Dorsolateral prefrontal cortex (tissue), 120 donors: ENCODE measurements at regions of chr9 and their contacts with region 1.

Region 1: DNA sequence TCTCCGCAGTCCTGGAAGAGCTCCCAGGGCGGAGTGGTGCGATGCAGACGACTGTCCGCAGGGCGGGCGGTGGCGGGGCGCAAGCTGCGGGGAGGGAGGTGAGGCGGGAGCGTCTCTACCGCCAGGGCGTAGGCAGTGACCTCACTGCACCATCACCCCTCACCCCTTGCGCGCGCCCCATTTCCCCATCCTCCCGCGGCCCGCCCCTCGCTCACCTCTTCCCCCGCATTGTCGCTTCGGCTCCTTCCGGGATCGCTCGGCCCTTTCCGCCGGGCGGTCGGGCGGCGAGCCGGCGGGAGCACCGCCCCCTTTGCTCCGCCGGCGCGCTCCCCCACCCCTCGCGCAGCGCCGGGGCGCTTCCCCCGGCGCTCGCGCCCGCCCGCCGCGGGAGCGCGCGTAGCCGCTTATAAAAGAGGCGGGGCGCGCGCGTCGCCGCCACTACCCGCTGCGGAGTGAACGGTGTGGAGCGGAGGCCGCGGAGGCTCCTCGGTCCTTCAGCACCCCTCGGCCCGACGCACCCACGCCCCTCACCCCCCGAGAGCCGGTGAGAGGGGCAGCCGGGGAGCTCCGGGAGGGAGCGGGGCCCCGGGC is at the start of gene SPTAN1:
- DNase-seq: peak; percentile 69 to 94 (median 86)
- H3K4me3 ChIP-seq: peak within 1 kb of the TSS; percentile 54 to 99 (median 92)
- H3K27ac ChIP-seq: peak within 1 kb of the TSS; percentile 66 to 99 (median 96)
- H3K27me3 ChIP-seq: no peaks in the 10 kb centered on the region
- CTCF ChIP-seq: peak in 19 of 56 donors; percentile 7 to 45 (median 18)
- total RNA-seq, gene SPTAN1: 588 to 1,376 (median 1,110) TPM

Region 2: GRCh38 chr9:128322404-128323211 is 229.6 kb before region 1 on chr9 and contains the starts of genes COQ4 and TRUB2:
- intact Hi-C with region 1: loop called in 1 of 2 experiments (anchors 10 kb)
- DNase-seq: peak; percentile 89 to 96 (median 94)
- H3K4me3 ChIP-seq: peak within 1 kb of the TSS; percentile 68 to 100 (median 95)
- H3K27ac ChIP-seq: peak within 1 kb of the TSS; percentile 81 to 100 (median 98)
- H3K27me3 ChIP-seq: no peaks in the 10 kb centered on the region
- CTCF ChIP-seq: peak in 28 of 56 donors; percentile 2 to 57 (median 22)
- total RNA-seq, gene COQ4: 28.0 to 67.5 (median 47.0) TPM
- total RNA-seq, gene TRUB2: 20.6 to 66.5 (median 44.9) TPM

Region 3: DNA sequence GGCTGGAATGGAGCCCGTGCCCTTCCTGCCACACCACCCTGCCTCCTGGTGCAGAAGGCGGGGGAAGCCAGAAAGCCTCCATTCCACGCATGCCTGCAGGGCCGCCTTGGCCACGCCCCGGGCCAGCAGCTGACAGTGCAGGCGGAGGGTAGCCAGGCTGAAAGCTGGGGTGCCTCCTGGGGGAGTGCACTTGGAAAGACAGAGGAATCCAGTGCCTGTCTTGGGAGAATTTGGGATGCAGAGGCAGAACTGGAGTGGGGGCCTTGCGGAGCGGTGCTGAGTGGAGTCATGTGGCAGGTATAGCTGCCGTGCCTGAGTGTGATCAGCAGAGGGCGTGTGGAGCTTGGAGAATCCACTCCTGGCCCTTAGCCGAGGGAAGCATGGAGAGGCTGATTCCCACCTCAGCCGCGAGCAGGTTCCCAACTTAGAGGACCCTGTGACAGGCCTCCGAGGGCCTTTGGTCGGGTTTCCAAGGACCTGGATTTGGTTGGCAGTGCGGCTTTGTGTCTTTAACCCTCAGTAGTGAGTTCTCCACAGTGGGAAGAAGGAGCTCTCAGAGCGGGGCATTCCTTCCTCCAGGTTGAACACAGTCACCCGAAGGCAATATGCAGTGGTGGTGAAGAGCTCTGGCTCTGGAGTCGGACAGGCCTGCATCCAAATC is 190.1 kb before region 1 on chr9:
- intact Hi-C with region 1: loop called in 1 of 2 experiments (anchors 5 kb)
- DNase-seq: peak; percentile 76 to 93 (median 91)
- H3K4me3 ChIP-seq: peak overlapping the region in 58 of 59 donors; percentile 12 to 67 (median 48)
- H3K27ac ChIP-seq: peak overlapping the region; percentile 44 to 100 (median 95)
- H3K27me3 ChIP-seq: no peaks in the 10 kb centered on the region
- CTCF ChIP-seq: peak; percentile 70 to 99 (median 96)

Region 4: DNA sequence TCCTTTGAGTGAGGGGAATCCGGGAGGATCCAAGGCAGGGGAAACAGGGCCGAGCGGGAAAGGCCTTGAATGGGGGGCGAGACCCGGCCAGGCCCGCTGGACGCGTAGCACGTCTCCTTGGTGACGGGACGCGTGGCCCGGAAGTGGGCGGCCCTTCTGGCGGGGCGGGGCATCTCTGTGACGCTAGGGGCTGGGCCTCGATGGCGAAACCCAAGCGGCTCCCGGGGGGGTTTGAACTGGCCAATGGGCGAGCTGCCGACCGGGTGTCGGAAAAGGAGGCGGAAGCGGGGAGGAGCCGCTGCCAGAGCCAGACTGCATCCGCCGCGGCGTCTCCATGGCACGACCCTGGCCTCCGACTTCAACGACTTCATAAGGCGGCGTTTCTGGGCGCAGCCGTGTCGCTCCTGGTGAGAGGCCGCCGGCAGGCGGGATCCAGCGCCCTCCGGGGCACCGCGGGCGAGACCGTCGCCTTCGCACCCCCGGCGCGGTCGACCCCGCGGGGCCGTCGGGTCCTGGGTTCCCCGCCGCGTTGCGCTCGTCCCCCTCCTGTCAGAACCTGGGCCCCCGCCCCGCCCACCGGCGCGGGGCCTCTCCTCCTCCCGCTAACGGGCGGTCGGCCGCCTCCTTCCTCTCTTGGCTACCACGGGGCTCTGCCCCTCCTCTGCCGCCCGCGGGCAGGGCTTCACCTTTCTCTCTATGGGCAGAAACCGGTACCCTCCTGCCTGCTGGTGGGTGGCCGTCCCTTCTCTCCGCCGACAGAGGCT is 96.2 kb before region 1 on chr9 and contains the start of gene ODF2:
- intact Hi-C with region 1: loop called in 1 of 2 experiments (anchors 5 kb)
- DNase-seq: peak; percentile 98 to 100 (median 98)
- H3K4me3 ChIP-seq: peak within 1 kb of the TSS; percentile 52 to 96 (median 87)
- H3K27ac ChIP-seq: peak within 1 kb of the TSS in 46 of 59 donors; percentile 19 to 87 (median 67)
- H3K27me3 ChIP-seq: no peaks in the 10 kb centered on the region
- CTCF ChIP-seq: peak in 11 of 56 donors; percentile 8 to 41 (median 21)
- total RNA-seq, gene ODF2: 20.1 to 43.4 (median 28.1) TPM

Region 5: DNA sequence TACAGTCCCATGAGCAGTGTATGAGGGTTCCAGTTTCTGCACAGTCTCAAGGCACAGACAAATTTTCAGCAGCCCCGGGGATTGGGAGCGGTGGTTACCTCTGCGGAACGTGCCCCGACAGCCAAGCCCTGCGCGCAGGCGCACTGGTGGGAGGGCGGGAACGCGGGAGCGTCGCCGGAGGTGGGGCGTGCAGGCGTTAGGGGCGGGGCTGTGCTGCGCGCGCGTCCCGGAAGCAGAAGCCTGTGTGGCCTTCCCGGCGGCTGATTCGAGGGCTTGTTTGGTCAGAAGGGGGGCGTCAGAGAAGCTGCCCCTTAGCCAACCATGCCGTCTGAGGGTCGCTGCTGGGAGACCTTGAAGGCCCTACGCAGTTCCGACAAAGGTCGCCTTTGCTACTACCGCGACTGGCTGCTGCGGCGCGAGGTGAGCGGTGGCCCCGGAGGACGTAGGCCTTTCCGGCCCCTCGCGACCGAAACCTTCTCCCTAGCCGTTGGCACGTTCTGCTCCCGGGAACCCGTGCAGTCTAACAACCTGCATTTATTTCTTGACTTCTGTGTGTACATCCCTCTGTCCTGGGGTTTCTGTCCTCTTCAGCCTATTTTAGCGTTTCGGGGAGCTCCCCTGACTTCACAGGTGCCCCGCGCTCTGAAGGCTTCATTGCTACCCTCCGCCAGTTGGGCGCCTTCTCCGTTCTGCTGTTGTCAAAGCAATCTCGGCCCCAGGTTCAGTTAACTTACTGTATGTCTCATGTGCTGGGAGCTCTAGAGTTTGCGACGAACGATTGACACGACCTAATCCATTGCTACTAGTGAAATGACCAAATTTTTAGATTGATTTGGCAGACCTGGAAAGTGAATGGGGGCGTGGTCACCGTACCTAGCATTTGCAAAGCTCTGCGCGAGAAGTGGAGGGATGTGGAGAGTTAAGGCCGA is 47.5 kb before region 1 on chr9 and contains the start of gene GLE1:
- intact Hi-C with region 1: loop called (anchors 2 to 5 kb)
- DNase-seq: peak; percentile 89 to 97 (median 94)
- H3K4me3 ChIP-seq: peak within 1 kb of the TSS; percentile 57 to 100 (median 92)
- H3K27ac ChIP-seq: peak within 1 kb of the TSS in 56 of 59 donors; percentile 14 to 89 (median 75)
- H3K27me3 ChIP-seq: no peaks in the 10 kb centered on the region
- CTCF ChIP-seq: peak in 18 of 56 donors; percentile 4 to 54 (median 34)
- total RNA-seq, gene GLE1: 11.7 to 22.4 (median 16.7) TPM

Region 6: DNA sequence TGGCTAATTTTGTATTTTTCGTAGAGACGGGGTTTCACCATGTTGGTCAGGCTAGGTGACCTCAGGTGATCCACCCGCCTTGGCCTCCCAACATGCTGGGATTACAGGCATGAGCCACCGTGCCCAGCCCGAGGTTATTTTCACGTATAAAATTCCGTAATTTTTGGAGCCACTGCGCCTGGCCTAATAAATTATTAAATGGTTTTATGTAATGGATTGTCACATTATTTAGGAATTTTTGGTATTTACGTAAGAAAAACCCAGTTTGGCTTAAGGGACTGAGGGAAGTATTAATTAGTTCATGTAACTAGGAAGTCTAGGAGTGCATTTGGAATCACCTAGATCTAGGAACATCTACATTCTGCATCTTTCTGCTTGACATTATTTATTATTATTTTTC is 39.4 kb before region 1 on chr9:
- intact Hi-C with region 1: loop called in 1 of 2 experiments (anchors 5 kb)
- DNase-seq: no peak
- H3K4me3 ChIP-seq: no peak overlapping the region
- H3K27ac ChIP-seq: no peak overlapping the region
- H3K27me3 ChIP-seq: no peaks in the 10 kb centered on the region
- CTCF ChIP-seq: no peak

Region 7: DNA sequence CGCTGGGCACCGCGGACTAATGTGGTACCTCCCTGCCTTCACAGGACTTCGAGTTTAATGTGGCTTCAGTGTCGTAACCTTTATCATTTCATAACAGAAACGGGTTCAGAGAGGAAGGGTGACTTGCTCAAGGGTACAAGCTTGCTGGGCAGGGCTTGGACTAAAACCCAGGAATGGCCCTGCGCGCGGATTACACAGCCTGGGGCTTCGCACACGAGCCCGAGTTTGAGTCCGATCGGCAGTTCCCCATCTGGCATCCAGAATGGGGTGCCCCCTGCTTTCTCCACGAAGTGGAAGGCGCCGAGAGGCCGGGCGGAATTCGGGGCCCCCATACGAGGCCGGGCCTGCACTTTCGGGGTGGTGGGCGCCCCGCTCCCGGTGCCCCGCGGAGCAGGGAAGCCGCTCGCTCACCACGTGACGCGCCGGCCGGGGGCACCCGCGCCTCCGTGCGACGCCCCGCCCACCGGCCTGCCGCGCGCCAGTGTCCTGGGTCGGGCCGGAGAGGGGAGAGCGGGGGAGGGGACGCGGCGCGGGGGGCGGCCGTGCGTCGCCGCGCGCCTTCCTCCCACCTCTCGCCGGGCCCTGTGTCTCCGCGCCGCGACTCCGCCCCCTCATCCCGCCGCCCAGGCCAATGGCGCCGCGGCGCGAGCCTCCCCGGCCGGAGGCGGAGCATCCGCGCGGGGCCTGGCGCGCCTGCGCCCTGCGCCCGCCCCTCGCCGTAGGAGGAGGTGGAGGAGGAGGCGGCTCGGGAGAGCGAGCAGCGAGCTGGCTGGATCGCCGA is 136.5 kb after region 1 on chr9 and contains the start of gene SET:
- intact Hi-C with region 1: loop called in 1 of 2 experiments (anchors 5 kb)
- DNase-seq: peak; percentile 78 to 94 (median 86)
- H3K4me3 ChIP-seq: peak within 1 kb of the TSS; percentile 64 to 97 (median 83)
- H3K27ac ChIP-seq: peak within 1 kb of the TSS; percentile 76 to 99 (median 96)
- H3K27me3 ChIP-seq: peaks cover 0 to 10% (median 0%) of the 10 kb centered on the region in 45 donors
- CTCF ChIP-seq: peak in 12 of 56 donors; percentile 1 to 33 (median 11)
- total RNA-seq, gene SET: 147 to 261 (median 187) TPM